ENCODE measurements at regions of chr12 and their contacts with region 1.

Region 1: GRCh38 chr12:76031537-76032073 is at the start of gene PHLDA1:
- DNase-seq: peak; percentile 84 to 93 (median 87)
- ATAC-seq: peak; percentile 91
- H3K4me3 ChIP-seq: peak within 1 kb of the TSS; percentile 54
- H3K27ac ChIP-seq: peak within 1 kb of the TSS; percentile 76
- H3K4me1 ChIP-seq: peaks cover 29 to 37% of the 10 kb centered on the region in 2 experiments; a peak in 4 of 5 replicates
- H3K27me3 ChIP-seq: peaks cover 0 to 8% of the 10 kb centered on the region in 2 experiments; a peak in 1 of 5 replicates
- CTCF ChIP-seq: peak; percentile 65 to 98 (median 91)
- EP300 ChIP-seq: no peak
- POLR2A ChIP-seq: peak; percentile 76
- RAD21 ChIP-seq: peak; percentile 94 to 99
- polyA plus RNA-seq, gene PHLDA1: 0.15 to 0.56 TPM

Region 2: GRCh38 chr12:75489613-75490210 is 541.9 kb before region 1 on chr12:
- CTCF ChIA-PET with region 1: no interaction called
- POLR2A ChIA-PET with region 1: interaction called, 4 read pairs
- in situ Hi-C with region 1: no loop called
- intact Hi-C with region 1: loop called (anchors 5 kb)
- DNase-seq: no peak
- ATAC-seq: no peak
- H3K4me3 ChIP-seq: no peak overlapping the region
- H3K27ac ChIP-seq: no peak overlapping the region
- H3K4me1 ChIP-seq: no peaks in the 10 kb centered on the region
- H3K27me3 ChIP-seq: no peaks in the 10 kb centered on the region
- CTCF ChIP-seq: no peak
- EP300 ChIP-seq: no peak
- POLR2A ChIP-seq: no peak
- RAD21 ChIP-seq: no peak

Region 3: GRCh38 chr12:75578546-75578945 is 453.1 kb before region 1 on chr12:
- CTCF ChIA-PET with region 1: no interaction called
- POLR2A ChIA-PET with region 1: no interaction called
- in situ Hi-C with region 1: no loop called
- intact Hi-C with region 1: loop called (anchors 1 kb)
- DNase-seq: no peak
- ATAC-seq: no peak
- H3K4me3 ChIP-seq: no peak overlapping the region
- H3K27ac ChIP-seq: no peak overlapping the region
- H3K4me1 ChIP-seq: no peaks in the 10 kb centered on the region
- H3K27me3 ChIP-seq: no peaks in the 10 kb centered on the region; a peak in 1 of 5 replicates
- CTCF ChIP-seq: no peak
- EP300 ChIP-seq: no peak
- POLR2A ChIP-seq: no peak
- RAD21 ChIP-seq: no peak

Region 4: DNA sequence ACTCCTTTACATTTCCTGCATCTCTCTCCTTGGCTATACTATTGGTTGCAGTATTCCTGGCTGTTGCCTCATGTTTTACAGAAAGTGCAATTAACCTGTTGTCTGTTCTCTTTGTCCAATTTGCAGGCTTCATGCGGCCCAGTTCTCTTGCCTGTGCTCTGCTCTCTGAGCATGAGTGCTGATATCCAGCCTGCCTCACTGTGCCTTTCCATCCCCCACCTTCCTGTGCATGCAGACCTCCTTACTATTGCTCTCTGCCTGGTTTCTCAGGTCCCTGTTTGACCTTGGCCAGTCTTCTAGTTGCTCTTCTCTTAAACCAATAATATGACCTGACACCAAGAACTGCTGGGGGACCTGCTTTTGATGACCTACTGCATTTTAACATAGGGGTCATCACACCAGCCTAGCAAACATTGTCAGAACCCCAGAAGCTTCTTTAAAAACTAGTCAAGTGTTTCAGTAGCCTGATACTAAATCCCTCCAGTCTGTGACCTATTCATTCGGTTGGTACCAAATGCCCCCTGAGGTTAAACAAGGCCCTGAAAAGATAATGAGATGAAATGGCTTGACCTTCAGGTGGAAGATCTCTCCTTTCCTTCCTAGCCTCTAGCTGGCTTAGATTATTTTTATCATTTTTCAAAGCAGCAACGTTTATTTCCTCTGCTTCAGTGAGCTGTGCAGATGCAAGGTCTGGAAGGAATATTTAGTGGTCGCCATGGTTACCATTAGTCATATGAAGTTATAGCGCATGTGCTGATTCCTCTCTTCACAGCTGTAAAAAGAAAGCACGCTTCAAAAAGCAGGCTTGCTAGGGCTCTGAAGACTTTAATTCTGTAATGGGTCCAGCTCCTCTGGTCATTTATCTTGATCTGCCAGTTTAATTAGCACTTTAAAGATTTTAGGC is 216.5 kb before region 1 on chr12:
- CTCF ChIA-PET with region 1: no interaction called
- POLR2A ChIA-PET with region 1: no interaction called
- in situ Hi-C with region 1: no loop called
- intact Hi-C with region 1: loop called (anchors 5 kb)
- DNase-seq: peak in 1 of 4 experiments; percentile 13
- ATAC-seq: no peak
- H3K4me3 ChIP-seq: no peak overlapping the region
- H3K27ac ChIP-seq: no peak overlapping the region
- H3K4me1 ChIP-seq: no peaks in the 10 kb centered on the region; a peak in 1 of 5 replicates
- H3K27me3 ChIP-seq: 0 out of 5 replicates have a peak, but pooled peaks cover 0 to 4% of the 10 kb centered on the region in 2 experiments
- CTCF ChIP-seq: no peak
- EP300 ChIP-seq: no peak
- POLR2A ChIP-seq: no peak
- RAD21 ChIP-seq: no peak

Region 5: GRCh38 chr12:75954041-75954440 is 77.6 kb before region 1 on chr12:
- CTCF ChIA-PET with region 1: no interaction called
- POLR2A ChIA-PET with region 1: no interaction called
- in situ Hi-C with region 1: no loop called
- intact Hi-C with region 1: loop called (anchors 5 kb)
- DNase-seq: peak; percentile 20 to 67 (median 38)
- ATAC-seq: peak; percentile 82
- H3K4me3 ChIP-seq: no peak overlapping the region
- H3K27ac ChIP-seq: peak overlapping the region; percentile 9; the same call in 1 of the 3 replicates
- H3K4me1 ChIP-seq: peaks cover 0 to 19% of the 10 kb centered on the region in 2 experiments; a peak in 3 of 5 replicates
- H3K27me3 ChIP-seq: no peaks in the 10 kb centered on the region
- CTCF ChIP-seq: no peak
- EP300 ChIP-seq: no peak; the same call in 1 of the 2 replicates
- POLR2A ChIP-seq: no peak
- RAD21 ChIP-seq: no peak

Region 6: GRCh38 chr12:76074701-76075336 is 43.2 kb after region 1 on chr12:
- CTCF ChIA-PET with region 1: no interaction called
- POLR2A ChIA-PET with region 1: no interaction called
- in situ Hi-C with region 1: no loop called
- intact Hi-C with region 1: no loop called
- DNase-seq: peak in 3 of 4 experiments; percentile 28 to 73 (median 53)
- ATAC-seq: peak; percentile 80
- H3K4me3 ChIP-seq: no peak overlapping the region
- H3K27ac ChIP-seq: peak overlapping the region; percentile 25; the same call in 2 of the 3 replicates
- H3K4me1 ChIP-seq: peaks cover 0 to 15% of the 10 kb centered on the region in 2 experiments; a peak in 3 of 5 replicates
- H3K27me3 ChIP-seq: no peaks in the 10 kb centered on the region
- CTCF ChIP-seq: no peak
- EP300 ChIP-seq: peak; percentile 26; the same call in 1 of the 2 replicates
- POLR2A ChIP-seq: no peak
- RAD21 ChIP-seq: no peak

Region 7: DNA sequence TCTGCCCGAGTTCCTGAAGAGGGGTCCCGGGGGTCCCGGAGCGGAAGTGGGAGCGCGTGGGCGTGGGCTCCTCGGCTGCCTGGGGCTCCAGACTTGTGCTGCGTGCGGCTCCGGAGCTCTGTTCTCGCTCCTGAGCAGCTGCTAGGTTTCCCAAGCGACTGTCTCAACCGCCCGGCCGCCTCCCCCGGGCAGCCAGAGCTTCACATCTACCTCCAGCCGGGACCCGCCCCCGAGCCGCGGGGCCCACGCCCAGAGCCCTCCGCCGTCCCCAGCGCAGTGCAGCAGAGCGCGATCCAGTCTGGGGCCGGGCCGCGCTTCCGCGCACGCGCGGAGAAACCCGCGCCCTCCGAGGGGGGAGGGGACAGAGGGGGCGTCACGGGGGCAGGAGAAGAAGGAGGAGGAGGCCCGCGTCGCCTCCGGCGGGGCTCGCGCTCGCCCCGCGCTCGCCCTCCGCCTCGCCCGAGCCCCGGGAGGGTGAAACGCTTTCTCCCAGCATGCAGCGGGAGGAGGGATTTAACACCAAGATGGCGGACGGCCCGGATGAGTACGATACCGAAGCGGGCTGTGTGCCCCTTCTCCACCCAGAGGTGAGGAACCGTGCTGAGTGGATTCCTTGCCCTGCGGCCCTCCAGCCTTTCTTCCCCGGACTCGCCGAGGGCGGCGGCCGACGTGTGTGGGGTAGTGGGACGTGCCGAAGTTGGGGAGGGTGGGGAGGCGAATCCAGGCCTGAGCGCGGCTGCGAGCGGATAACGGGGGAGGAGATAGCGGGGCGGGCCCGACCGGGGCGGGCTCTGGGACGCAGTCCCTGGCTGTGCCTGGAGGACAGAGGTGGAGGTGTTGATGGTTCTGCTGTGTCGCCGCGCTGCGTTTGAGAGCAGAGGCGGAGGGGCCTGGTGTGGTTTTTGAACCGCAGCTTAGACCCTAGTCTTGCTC is 732.4 kb after region 1 on chr12 and contains the start of gene ZDHHC17:
- CTCF ChIA-PET with region 1: no interaction called
- POLR2A ChIA-PET with region 1: no interaction called
- in situ Hi-C with region 1: no loop called
- intact Hi-C with region 1: no loop called
- DNase-seq: peak; percentile 94 to 95 (median 94)
- ATAC-seq: peak; percentile 93
- H3K4me3 ChIP-seq: peak within 1 kb of the TSS; percentile 87
- H3K27ac ChIP-seq: peak within 1 kb of the TSS; percentile 97
- H3K4me1 ChIP-seq: peaks cover 8 to 22% of the 10 kb centered on the region in 2 experiments; a peak in 4 of 5 replicates
- H3K27me3 ChIP-seq: no peaks in the 10 kb centered on the region
- CTCF ChIP-seq: no peak
- EP300 ChIP-seq: peak; percentile 10
- POLR2A ChIP-seq: peak; percentile 94
- RAD21 ChIP-seq: no peak
- polyA plus RNA-seq, gene ZDHHC17: 6.7 to 12.4 TPM

Measured in K562 (cell line).